Sigmoid colon (tissue), 7 donors: ENCODE measurements at regions of chr4 and their contacts with region 1.

Region 1: DNA sequence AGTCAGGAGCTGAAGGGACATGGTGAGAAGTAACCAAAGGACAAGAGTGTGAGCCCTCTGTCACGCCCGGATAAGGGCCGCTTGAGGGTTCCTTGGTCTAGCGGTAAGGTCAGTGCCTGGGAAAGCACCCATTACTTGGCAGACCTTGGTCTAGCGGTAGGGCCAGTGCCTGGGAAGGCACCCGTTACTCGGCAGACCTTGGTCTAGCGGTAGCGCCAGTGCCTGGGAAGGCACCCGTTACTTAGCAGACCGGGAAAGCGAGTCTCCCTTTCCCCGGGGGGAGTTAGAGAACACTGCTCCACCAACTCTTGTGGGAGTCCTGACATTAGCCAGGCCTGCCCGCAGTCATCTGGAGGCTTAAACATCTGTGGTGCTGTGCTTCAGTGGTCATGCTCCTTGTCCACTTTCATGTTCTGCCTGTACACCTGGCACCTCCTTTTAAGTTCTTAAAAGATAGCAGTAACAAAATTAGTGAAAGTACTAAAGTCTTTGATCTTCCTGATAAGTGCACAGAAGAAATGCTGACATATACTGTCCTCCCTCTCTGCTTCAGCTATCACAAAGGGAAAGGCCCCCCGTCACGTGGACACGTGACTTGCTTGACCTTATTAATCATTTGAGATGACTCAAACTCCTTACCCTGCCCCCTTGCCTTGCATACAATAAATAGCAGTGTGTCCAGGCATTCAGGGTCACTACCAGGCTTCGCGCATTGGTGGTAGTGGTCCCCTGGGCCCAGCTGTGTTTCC is 9.3 kb upstream of the SEC24B start:
- DNase-seq: no peak
- H3K4me3 ChIP-seq: no peak overlapping the region
- H3K27ac ChIP-seq: no peak overlapping the region
- H3K4me1 ChIP-seq: peaks cover 0 to 6% (median 4%) of the 10 kb centered on the region in 4 donors
- H3K27me3 ChIP-seq: no peaks in the 10 kb centered on the region
- CTCF ChIP-seq: no peak
- EP300 ChIP-seq: no peak
- POLR2A ChIP-seq: no peak

Region 2: GRCh38 chr4:109559983-109560686 is 135.9 kb after region 1 on chr4 and contains the start of gene MCUB:
- intact Hi-C with region 1: loop called (anchors 2 kb)
- DNase-seq: peak; percentile 93
- H3K4me3 ChIP-seq: peak within 1 kb of the TSS; percentile 51 to 81 (median 67)
- H3K27ac ChIP-seq: peak within 1 kb of the TSS; percentile 68 to 93 (median 84)
- H3K4me1 ChIP-seq: peaks cover 0 to 23% (median 17%) of the 10 kb centered on the region in 4 donors
- H3K27me3 ChIP-seq: no peaks in the 10 kb centered on the region
- CTCF ChIP-seq: no peak
- EP300 ChIP-seq: no peak
- POLR2A ChIP-seq: no peak
- total RNA-seq, gene MCUB: 5.0 to 10.9 (median 8.8) TPM

Region 3: DNA sequence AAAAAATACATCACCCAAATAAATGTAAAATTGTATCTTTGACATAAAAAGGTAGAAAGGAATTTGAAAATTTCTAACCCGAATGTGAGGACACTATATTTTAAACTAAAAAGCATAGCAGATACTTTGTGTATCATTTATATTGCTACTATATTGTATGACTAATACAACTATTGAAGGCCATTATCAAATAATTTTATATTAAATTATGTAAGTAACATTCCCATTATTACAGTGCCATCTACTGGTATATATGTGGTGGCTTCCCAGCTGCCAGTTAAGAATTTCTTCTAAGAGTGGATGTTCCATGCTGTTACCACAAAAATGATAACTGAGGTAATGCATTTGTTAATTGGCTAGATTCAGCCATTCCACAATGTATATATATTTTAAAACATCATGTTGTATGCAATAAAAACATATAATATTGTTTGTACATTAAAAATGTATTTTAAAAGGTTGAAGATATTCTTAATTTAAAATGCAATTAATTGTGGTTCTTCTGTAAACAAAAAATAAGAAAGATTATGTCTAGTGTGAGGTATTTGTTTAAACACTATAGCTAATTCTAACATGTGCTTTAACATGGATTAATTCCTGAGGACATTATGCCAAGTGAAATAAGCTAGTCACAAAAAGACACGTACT is 553.7 kb after region 1 on chr4:
- intact Hi-C with region 1: loop called (anchors 1 kb)
- DNase-seq: no peak
- H3K4me3 ChIP-seq: no peak overlapping the region
- H3K27ac ChIP-seq: no peak overlapping the region
- H3K4me1 ChIP-seq: no peaks in the 10 kb centered on the region
- H3K27me3 ChIP-seq: no peaks in the 10 kb centered on the region
- CTCF ChIP-seq: peak in 3 of 4 experiments; percentile 30 to 61 (median 31)
- EP300 ChIP-seq: no peak
- POLR2A ChIP-seq: no peak